Prostate gland (tissue), 2 donors: ENCODE measurements at regions of chr18 and their contacts with region 1.

Region 1: GRCh38 chr18:48675352-48675761 is 136.5 kb downstream of the CTIF start:
- DNase-seq: peak; percentile 81
- H3K4me3 ChIP-seq: no peak overlapping the region
- H3K27ac ChIP-seq: no peak overlapping the region
- H3K4me1 ChIP-seq: no peaks in the 10 kb centered on the region
- H3K27me3 ChIP-seq: no peaks in the 10 kb centered on the region
- CTCF ChIP-seq: peak; percentile 85 to 94 (median 88)
- POLR2A ChIP-seq: no peak

Region 2: DNA sequence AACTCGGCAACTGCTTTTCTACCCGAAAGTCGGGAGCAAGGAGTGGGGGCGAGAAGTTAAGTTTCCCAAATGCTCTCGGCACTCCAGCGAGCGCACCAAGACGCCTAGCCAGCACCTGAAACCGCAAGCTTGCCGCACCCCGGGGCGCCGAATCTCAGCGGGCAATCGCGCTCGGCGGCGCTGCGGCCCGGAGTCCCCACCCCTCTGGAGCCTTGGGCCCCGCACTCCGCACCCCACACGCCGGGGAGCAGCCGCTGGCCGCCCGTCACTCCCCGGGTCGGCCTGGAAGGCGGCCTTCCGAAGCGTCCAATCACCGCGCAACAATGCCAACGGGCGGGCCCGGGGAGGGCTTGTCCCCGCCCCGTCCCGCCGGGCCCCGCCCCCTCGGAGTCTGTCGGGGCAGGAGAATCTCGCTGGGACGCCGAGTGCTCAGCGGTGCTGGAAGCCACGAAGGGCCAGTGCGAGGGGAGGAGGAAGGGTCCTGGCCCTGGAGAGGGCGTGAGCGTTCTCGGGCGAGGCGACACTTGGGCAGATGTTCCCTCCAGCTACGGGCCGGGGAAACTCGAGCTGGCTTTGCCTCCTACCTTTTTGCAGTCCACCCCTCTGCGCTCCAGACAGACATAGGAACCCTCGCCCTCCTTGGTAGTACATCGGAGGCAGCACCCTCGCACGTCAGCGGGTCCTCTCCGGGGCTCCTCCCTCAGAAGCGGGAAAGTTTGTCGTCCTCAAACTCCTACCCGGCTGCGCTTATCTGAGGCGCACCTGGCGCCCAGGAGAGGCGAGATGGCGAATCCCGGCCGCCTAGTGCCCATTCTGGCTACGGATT is 265.0 kb before region 1 on chr18:
- intact Hi-C with region 1: no loop called
- DNase-seq: peak; percentile 90
- H3K4me3 ChIP-seq: peak overlapping the region; percentile 55 to 58
- H3K27ac ChIP-seq: peak overlapping the region; percentile 39 to 68
- H3K4me1 ChIP-seq: no peaks in the 10 kb centered on the region
- H3K27me3 ChIP-seq: no peaks in the 10 kb centered on the region
- CTCF ChIP-seq: no peak
- POLR2A ChIP-seq: peak; percentile 74

Region 3: GRCh38 chr18:48913201-48913600 is 237.8 kb after region 1 on chr18:
- intact Hi-C with region 1: no loop called
- DNase-seq: no peak
- H3K4me3 ChIP-seq: no peak overlapping the region
- H3K27ac ChIP-seq: no peak overlapping the region
- H3K4me1 ChIP-seq: no peaks in the 10 kb centered on the region
- H3K27me3 ChIP-seq: no peaks in the 10 kb centered on the region
- CTCF ChIP-seq: peak in 3 of 4 experiments; percentile 20 to 41 (median 23)
- POLR2A ChIP-seq: no peak

Region 4: DNA sequence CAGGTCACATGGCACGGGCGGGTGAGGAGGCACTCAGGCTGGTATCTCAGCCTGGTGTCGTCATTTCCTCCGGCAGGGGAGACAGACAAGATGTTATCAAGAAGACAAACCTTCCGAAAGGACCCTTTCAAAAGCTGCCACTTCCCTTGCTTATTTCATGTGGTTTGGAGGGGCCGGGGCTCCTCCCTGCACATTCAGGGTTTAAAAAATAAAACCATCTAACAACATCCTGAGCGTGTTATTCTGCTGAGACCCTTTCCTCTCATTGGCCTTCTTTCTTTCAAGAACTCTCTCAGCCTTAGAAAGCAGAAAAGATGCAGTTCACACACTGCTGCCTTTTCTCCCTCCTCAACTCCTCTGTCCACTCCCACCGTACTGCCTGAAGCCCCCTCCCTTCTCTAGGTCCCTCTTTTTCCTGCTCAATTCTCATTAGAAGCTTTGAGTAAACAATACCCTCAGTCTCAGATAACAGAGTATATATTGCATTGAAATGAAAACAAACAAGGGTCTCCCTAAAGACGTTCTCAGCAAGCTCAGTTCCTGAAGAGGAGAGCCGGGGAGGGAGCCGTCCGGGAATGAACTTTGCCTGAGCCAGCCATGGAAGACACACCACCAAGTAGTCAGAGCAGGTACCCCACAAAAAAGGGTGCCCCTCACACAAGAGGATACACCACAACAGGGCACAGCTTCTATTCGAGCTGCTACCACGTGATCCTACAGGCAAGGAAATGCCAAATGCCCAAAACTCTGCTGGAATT is 265.7 kb after region 1 on chr18:
- intact Hi-C with region 1: loop called (anchors 5 kb)
- DNase-seq: no peak
- H3K4me3 ChIP-seq: no peak overlapping the region
- H3K27ac ChIP-seq: peak overlapping the region; percentile 68 to 98
- H3K4me1 ChIP-seq: peaks cover 51% of the 10 kb centered on the region
- H3K27me3 ChIP-seq: no peaks in the 10 kb centered on the region
- CTCF ChIP-seq: no peak
- POLR2A ChIP-seq: no peak

Region 5: DNA sequence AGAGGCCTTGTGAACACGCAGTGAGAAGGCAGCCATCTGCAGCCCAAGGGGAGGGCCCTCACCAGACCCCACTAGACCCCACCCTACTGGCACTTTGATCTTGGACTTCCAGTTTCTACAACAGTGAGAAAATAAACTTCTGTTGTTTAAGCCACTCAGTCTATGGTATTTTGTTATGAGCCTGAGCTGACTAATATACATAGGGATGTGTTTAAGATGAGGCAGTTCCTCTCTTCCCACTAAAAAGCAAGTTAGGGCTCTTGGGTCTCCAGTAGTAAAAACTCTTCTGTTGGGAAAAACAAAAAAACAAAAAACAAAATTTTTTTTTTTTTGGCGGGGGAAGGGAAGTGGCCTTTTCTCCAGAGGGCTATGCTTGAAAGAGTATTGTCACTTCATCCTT is 508.6 kb after region 1 on chr18:
- intact Hi-C with region 1: loop called (anchors 5 kb)
- DNase-seq: no peak
- H3K4me3 ChIP-seq: no peak overlapping the region
- H3K27ac ChIP-seq: no peak overlapping the region
- H3K4me1 ChIP-seq: no peaks in the 10 kb centered on the region
- H3K27me3 ChIP-seq: no peaks in the 10 kb centered on the region
- CTCF ChIP-seq: no peak
- POLR2A ChIP-seq: no peak

Region 6: DNA sequence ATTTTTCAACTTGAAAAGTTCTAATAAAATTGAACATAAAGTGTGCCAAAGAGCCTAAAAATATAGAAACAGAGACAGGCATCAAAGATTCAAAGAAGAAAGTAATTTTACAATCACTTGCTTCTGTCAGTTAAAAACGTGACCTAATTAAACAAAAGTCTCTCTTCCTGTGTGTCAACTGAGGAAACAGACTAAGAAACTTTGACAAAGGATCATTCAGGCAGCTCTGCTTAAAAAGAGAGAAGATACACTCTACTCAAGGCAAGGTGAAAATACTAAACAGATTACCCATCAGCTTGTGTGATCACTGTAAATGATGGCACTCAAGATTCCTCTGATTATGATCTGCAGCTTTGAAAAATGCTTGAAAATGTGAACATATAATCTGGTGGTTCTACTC is 737.3 kb after region 1 on chr18:
- intact Hi-C with region 1: loop called (anchors 10 kb)
- DNase-seq: no peak
- H3K4me3 ChIP-seq: no peak overlapping the region
- H3K27ac ChIP-seq: no peak overlapping the region
- H3K4me1 ChIP-seq: no peaks in the 10 kb centered on the region
- H3K27me3 ChIP-seq: no peaks in the 10 kb centered on the region
- CTCF ChIP-seq: no peak
- POLR2A ChIP-seq: no peak

Region 7: GRCh38 chr18:49878567-49879270 is 1203.4 kb after region 1 on chr18:
- intact Hi-C with region 1: no loop called
- DNase-seq: no peak
- H3K4me3 ChIP-seq: no peak overlapping the region
- H3K27ac ChIP-seq: no peak overlapping the region
- H3K4me1 ChIP-seq: no peaks in the 10 kb centered on the region
- H3K27me3 ChIP-seq: no peaks in the 10 kb centered on the region
- CTCF ChIP-seq: no peak
- POLR2A ChIP-seq: no peak